Panc1 (cell line): ENCODE measurements at regions of chr2 and their contacts with region 1.

Region 1: DNA sequence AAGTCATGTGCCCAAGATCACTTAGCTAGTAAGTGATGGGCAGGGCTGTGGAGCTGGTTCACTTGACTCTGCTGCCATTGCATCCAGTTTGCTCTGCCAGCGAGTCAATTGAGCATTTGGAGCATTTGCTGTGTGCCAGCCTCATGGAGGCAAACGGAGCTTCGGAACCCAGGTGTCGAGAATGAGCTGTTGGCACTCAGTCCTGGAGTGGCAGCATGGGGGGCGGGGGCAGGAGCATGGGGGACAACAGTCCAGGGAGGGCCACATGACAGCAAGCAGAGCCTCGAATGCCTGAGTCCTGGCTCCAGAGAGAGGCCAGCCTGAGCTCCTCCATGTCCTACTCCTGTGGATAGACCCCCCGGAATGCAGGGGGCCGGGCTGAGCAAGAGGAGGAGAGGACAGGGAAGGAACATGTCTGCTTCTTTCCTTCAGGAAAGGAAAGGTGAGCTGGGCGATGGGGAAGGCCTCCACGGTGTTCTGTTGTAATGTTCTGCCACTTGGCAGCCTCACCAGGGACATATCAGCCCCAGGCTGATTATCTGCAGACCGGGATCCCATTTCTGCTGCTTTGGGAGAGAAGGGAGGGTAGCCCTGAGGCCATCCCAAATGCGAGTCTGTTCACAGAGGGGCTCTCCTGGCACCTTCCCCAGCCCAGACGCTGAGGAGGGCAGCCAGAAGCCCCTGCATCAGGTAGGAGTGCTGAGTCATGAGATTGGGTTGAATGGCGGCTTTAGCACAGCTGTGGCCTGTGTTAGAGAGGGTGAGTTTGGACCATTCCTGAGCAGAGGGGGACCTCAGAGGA is 59.6 kb downstream of the HPCAL1 start:
- DNase-seq: no peak
- ATAC-seq: no peak
- H3K4me3 ChIP-seq: no peak overlapping the region
- H3K27ac ChIP-seq: peak overlapping the region; percentile 74
- H3K4me1 ChIP-seq: peaks cover 67% of the 10 kb centered on the region
- H3K27me3 ChIP-seq: no peaks in the 10 kb centered on the region
- CTCF ChIP-seq: no peak

Region 2: DNA sequence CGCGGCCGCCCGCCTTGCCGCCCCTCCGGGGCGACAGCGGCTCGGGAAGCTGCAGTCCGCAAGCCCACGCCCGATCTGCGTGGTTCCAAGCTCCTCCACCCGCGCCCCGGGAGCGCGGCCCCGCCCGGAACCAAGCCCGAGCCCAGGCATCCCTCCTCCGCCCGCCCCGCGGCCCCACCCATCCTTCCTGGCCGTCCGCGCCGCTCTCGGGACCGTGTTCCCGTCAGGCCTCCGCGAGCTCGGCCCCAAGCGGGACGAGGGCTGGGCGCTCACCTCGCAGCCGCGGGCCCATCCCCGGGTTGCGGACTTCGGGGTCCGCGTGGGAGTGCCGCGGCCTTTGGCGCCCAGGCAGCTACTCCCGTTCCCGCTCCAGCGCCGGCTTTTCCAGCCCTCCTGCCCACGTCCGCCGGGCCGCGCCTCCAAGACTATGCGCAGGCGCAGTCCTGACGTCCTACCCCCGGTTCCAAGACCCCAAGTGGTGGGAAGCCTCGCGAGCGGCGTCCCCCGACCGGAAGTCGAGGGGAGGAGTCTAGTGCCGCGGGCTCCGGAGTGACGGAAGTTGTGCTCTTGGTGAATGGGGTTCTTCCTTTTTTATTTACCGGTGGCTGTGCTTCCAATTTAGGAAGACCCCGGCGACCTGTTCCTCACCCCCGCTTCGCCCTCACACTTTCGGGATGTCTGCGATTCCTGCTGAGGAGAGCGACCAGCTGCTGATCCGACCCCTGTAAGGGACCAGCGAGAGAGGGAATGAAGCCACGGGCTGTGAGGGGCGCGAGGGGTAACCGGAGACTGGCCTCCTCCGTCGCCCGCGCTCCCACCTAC is 939.0 kb before region 1 on chr2 and contains the starts of genes CPSF3 and ITGB1BP1:
- CTCF ChIA-PET with region 1: no interaction called
- POLR2A ChIA-PET with region 1: interaction called, 14 read pairs
- in situ Hi-C with region 1: no loop called
- intact Hi-C with region 1: no loop called
- DNase-seq: peak; percentile 81
- ATAC-seq: peak; percentile 95
- H3K4me3 ChIP-seq: peak within 1 kb of the TSS; percentile 86 to 99
- H3K27ac ChIP-seq: peak within 1 kb of the TSS; percentile 96
- H3K4me1 ChIP-seq: peaks cover 13% of the 10 kb centered on the region
- H3K27me3 ChIP-seq: no peaks in the 10 kb centered on the region
- CTCF ChIP-seq: no peak
- total RNA-seq, gene CPSF3: 54.1 TPM
- total RNA-seq, gene ITGB1BP1: 153 TPM